H1 (cell line): ENCODE measurements at regions of chr4 and their contacts with region 1.

Region 1: GRCh38 chr4:153318696-153319320 is 25.7 kb upstream of the MND1 start:
- DNase-seq: no peak
- H3K4me3 ChIP-seq: no peak overlapping the region
- H3K27ac ChIP-seq: no peak overlapping the region
- H3K4me1 ChIP-seq: no peaks in the 10 kb centered on the region
- H3K27me3 ChIP-seq: no peaks in the 10 kb centered on the region
- CTCF ChIP-seq: peak in 2 of 3 experiments; percentile 62 to 67; a peak in 2 of 4 replicates
- EP300 ChIP-seq: no peak
- POLR2A ChIP-seq: no peak
- RAD21 ChIP-seq: peak; percentile 84 to 85

Region 2: DNA sequence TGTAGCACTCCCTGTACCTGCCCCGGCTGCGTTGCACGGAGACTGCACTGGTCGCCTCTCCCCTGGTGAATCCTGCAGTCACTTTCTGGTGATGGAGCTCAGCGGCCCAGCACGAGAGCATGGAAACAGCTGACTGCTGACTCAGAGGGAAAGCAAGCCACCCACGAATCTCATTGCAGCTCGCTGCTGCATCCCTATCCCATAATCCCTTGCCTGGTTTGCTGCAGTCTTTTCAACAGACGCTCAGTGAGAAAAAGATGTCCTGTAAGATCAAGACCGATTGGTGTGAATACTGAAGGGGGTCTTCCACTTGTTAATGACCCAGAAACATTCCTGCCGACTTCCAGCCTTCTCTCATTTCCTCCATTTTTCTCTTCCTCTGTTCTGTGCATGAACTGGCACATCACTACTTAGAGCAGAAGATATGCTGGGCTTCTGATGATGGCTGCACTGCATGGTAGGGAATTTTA is 61.6 kb before region 1 on chr4:
- CTCF ChIA-PET with region 1: interaction called, 11 read pairs
- POLR2A ChIA-PET with region 1: no interaction called
- DNase-seq: peak in 1 of 2 experiments; percentile 65
- H3K4me3 ChIP-seq: peak overlapping the region; percentile 36 to 61 (median 45); a peak in 7 of 8 replicates
- H3K27ac ChIP-seq: peak overlapping the region; percentile 87
- H3K4me1 ChIP-seq: peaks cover 6 to 29% (median 20%) of the 10 kb centered on the region in 4 experiments; a peak in 6 of 7 replicates
- H3K27me3 ChIP-seq: no peaks in the 10 kb centered on the region
- CTCF ChIP-seq: no peak
- EP300 ChIP-seq: no peak
- POLR2A ChIP-seq: peak in 1 of 2 experiments; percentile 79; a peak in 2 of 3 replicates
- RAD21 ChIP-seq: 0 out of 4 replicates have a peak, but pooled peaks have one; percentile 3 to 4

Region 3: DNA sequence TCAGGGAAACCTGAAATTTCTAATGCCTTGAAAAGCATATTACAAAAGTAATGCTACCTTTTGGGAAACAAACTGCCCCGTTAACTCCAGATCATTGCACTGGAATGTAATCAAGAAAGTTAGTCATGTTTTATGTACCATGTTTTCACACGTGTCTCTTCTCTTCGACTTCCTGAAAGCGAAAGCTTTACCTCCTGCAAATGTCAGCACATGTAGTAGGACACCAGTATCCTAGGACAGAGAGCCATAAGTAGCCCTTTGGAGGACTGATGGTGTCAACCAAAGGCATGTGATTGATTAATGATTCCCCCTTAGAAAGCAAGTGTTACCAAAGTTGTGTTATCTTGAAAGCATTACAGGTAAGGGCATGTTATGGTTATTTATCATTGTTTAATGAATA is 16.9 kb after region 1 on chr4:
- CTCF ChIA-PET with region 1: no interaction called
- POLR2A ChIA-PET with region 1: no interaction called
- DNase-seq: no peak
- H3K4me3 ChIP-seq: no peak overlapping the region
- H3K27ac ChIP-seq: no peak overlapping the region
- H3K4me1 ChIP-seq: no peaks in the 10 kb centered on the region
- H3K27me3 ChIP-seq: no peaks in the 10 kb centered on the region
- CTCF ChIP-seq: no peak
- EP300 ChIP-seq: no peak
- POLR2A ChIP-seq: no peak
- RAD21 ChIP-seq: no peak